ENCODE measurements at regions of chr12 and their contacts with region 1.

Region 1: DNA sequence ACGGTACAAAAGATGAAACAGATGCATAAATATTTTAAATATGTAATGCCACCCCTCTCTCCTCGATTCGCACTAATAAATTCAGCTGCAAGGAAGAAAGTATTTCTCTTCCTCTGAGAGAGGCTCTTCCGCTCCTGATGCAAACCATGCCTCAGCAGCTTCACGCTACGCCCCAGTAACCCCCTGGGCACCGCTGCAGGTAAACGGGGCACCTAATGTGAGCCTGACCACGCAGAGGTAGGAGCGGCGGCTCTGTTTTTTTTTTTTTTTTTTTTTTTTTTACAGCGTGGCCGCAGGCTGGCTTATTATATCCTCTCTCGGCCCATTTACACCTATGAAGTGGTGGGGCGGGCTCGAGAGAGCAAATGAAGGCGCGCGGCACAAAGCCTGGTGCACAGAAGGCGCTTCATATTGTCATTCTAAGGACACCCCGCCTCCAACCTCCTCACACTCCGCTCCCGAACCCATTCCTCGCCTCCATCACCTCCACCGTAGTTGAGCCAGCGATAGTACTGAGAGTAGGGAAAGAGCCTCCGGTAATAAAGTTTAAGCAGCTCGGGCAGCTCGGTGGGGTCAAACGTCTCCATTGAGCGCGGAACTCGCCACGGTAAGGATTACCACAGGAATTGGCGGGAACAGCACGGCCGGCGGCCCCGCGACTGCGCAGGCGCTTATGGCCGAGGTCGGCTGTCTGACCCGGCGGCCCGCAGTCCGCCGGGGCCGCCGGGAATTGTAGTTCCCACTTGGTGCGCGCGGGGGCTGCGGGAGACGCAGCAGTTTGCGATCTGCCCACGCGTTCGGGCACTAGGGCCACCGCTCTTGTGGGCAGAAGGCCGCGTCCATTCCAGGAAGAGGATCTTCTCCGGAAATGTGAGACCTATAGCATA is at the start of gene PRIM1:
- DNase-seq: peak; percentile 78
- H3K4me3 ChIP-seq: peak within 1 kb of the TSS; percentile 86 to 96 (median 89)
- H3K27ac ChIP-seq: peak within 1 kb of the TSS; percentile 70
- H3K4me1 ChIP-seq: no peaks in the 10 kb centered on the region
- H3K27me3 ChIP-seq: no peaks in the 10 kb centered on the region
- CTCF ChIP-seq: peak in 1 of 2 donors; percentile 23
- total RNA-seq, gene PRIM1: 5.0 to 16.1 TPM

Region 2: DNA sequence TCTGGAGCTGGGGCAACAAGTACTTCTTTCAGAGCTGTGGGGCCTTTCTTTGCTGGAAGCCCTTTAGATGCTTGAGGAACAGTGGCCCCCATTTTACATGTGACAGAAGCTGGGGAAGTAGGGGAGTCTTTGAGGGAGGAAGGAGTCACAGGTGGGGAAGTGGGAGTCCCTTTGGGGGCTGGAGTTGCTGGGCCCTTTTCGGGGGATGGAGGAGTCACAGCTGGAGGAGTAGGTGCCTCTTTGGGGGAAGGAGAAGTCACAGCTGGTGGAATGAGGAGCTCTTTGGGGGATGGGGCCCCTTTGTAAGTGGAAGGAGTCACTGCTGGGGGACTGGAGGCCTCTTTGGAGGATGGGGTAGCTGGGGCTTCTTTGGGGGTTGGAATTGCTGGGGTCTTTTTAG is 35.5 kb before region 1 on chr12:
- CTCF ChIA-PET with region 1: interaction called, 22 read pairs
- dilution Hi-C with region 1: no loop called
- in situ Hi-C with region 1: no loop called
- intact Hi-C with region 1: no loop called
- DNase-seq: no peak
- H3K4me3 ChIP-seq: no peak overlapping the region
- H3K27ac ChIP-seq: no peak overlapping the region
- H3K4me1 ChIP-seq: peaks cover 11% of the 10 kb centered on the region
- H3K27me3 ChIP-seq: no peaks in the 10 kb centered on the region
- CTCF ChIP-seq: no peak

Region 3: GRCh38 chr12:56785141-56785865 is 33.3 kb after region 1 on chr12:
- CTCF ChIA-PET with region 1: no interaction called
- dilution Hi-C with region 1: no loop called
- in situ Hi-C with region 1: no loop called
- intact Hi-C with region 1: no loop called
- DNase-seq: no peak
- H3K4me3 ChIP-seq: no peak overlapping the region
- H3K27ac ChIP-seq: no peak overlapping the region
- H3K4me1 ChIP-seq: peaks cover under 1% of the 10 kb centered on the region
- H3K27me3 ChIP-seq: no peaks in the 10 kb centered on the region
- CTCF ChIP-seq: no peak

Region 4: DNA sequence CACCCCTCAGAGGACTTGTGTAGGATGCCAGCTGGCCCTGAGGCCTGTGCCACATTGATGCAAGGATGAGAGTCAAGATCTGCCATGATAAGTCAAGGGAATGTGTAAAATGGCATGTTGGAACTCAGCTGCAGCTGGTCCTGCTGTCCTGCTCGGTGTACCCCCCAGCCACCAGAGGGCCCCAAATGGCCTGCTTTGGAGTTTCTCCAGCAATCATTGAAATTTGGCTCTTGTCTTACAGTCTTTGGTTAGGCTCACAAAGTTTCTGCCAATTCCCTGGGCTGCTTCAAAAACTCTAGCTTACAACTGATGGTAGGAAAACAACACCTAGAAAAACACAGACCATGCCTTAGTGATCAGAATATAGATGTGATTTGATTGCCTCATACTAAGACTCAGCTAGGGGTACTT is 88.0 kb after region 1 on chr12:
- CTCF ChIA-PET with region 1: no interaction called
- dilution Hi-C with region 1: no loop called
- in situ Hi-C with region 1: no loop called
- intact Hi-C with region 1: loop called (anchors 2 kb)
- DNase-seq: peak; percentile 56
- H3K4me3 ChIP-seq: no peak overlapping the region
- H3K27ac ChIP-seq: no peak overlapping the region
- H3K4me1 ChIP-seq: peaks cover 34% of the 10 kb centered on the region
- H3K27me3 ChIP-seq: no peaks in the 10 kb centered on the region
- CTCF ChIP-seq: peak; percentile 77 to 85

Region 5: GRCh38 chr12:57005980-57006808 is 254.2 kb after region 1 on chr12 and contains the start of gene ZBTB39:
- CTCF ChIA-PET with region 1: interaction called, 7 read pairs
- dilution Hi-C with region 1: no loop called
- in situ Hi-C with region 1: no loop called
- intact Hi-C with region 1: loop called (anchors 1 kb)
- DNase-seq: peak; percentile 42
- H3K4me3 ChIP-seq: peak within 1 kb of the TSS; percentile 72 to 76 (median 73)
- H3K27ac ChIP-seq: no peak within 1 kb of the TSS
- H3K4me1 ChIP-seq: peaks cover 5% of the 10 kb centered on the region
- H3K27me3 ChIP-seq: no peaks in the 10 kb centered on the region
- CTCF ChIP-seq: peak; percentile 8 to 54
- total RNA-seq, gene ZBTB39: 5.7 to 8.0 TPM

Region 6: GRCh38 chr12:57069523-57069922 is 317.6 kb after region 1 on chr12:
- CTCF ChIA-PET with region 1: no interaction called
- dilution Hi-C with region 1: loop called (anchors 10 kb)
- in situ Hi-C with region 1: no loop called
- intact Hi-C with region 1: no loop called
- DNase-seq: peak; percentile 63
- H3K4me3 ChIP-seq: no peak overlapping the region
- H3K27ac ChIP-seq: no peak overlapping the region
- H3K4me1 ChIP-seq: peaks cover 9% of the 10 kb centered on the region
- H3K27me3 ChIP-seq: no peaks in the 10 kb centered on the region
- CTCF ChIP-seq: peak; percentile 83 to 90

Region 7: GRCh38 chr12:57175428-57176138 is 423.6 kb after region 1 on chr12:
- CTCF ChIA-PET with region 1: no interaction called
- dilution Hi-C with region 1: loop called (anchors 5 kb)
- in situ Hi-C with region 1: no loop called
- intact Hi-C with region 1: loop called (anchors 10 kb)
- DNase-seq: peak; percentile 95
- H3K4me3 ChIP-seq: peak overlapping the region in 2 of 3 experiments; percentile 28 to 31
- H3K27ac ChIP-seq: peak overlapping the region; percentile 5
- H3K4me1 ChIP-seq: peaks cover 30% of the 10 kb centered on the region
- H3K27me3 ChIP-seq: no peaks in the 10 kb centered on the region
- CTCF ChIP-seq: peak; percentile 86 to 91